ENCODE measurements at regions of chr5 and their contacts with region 1.

Region 1: GRCh38 chr5:55172051-55172899 is 702 bp downstream of the CDC20B start:
- DNase-seq: peak; percentile 58
- H3K4me3 Mint-ChIP-seq: peak overlapping the region; percentile 74
- H3K27ac Mint-ChIP-seq: no peak overlapping the region
- H3K4me1 Mint-ChIP-seq: peaks cover 22% of the 10 kb centered on the region
- H3K27me3 Mint-ChIP-seq: peaks cover 9% of the 10 kb centered on the region
- CTCF ChIP-seq: peak; percentile 51

Region 2: GRCh38 chr5:55134053-55134722 is 38.1 kb before region 1 on chr5:
- CTCF ChIA-PET with region 1: no interaction called
- intact Hi-C with region 1: no loop called
- DNase-seq: no peak
- H3K4me3 Mint-ChIP-seq: no peak overlapping the region
- H3K27ac Mint-ChIP-seq: no peak overlapping the region
- H3K4me1 Mint-ChIP-seq: no peaks in the 10 kb centered on the region
- H3K27me3 Mint-ChIP-seq: peaks cover 68% of the 10 kb centered on the region
- CTCF ChIP-seq: no peak

Region 3: DNA sequence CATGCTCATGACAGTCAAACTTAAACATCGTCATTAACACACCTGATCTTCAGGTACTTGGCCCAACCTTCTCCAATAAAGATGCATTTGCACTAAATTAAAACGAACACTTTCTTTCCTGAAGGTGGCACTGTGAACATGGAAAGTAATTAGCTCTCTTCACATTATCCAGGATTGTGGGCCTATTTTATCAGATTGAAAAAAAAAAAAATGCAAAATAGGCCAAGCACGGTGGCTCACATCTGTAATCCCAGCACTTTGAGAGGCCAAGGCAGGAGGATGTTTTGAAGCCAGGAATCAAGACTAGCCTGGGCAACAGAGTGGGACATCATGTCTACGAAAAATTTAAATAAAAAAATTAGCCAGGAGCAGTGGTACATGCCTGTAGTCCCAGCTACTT is 15.1 kb after region 1 on chr5:
- CTCF ChIA-PET with region 1: interaction called, 11 read pairs
- intact Hi-C with region 1: no loop called
- DNase-seq: peak; percentile 11
- H3K4me3 Mint-ChIP-seq: no peak overlapping the region
- H3K27ac Mint-ChIP-seq: no peak overlapping the region
- H3K4me1 Mint-ChIP-seq: no peaks in the 10 kb centered on the region
- H3K27me3 Mint-ChIP-seq: peaks cover 24% of the 10 kb centered on the region
- CTCF ChIP-seq: no peak

Region 4: DNA sequence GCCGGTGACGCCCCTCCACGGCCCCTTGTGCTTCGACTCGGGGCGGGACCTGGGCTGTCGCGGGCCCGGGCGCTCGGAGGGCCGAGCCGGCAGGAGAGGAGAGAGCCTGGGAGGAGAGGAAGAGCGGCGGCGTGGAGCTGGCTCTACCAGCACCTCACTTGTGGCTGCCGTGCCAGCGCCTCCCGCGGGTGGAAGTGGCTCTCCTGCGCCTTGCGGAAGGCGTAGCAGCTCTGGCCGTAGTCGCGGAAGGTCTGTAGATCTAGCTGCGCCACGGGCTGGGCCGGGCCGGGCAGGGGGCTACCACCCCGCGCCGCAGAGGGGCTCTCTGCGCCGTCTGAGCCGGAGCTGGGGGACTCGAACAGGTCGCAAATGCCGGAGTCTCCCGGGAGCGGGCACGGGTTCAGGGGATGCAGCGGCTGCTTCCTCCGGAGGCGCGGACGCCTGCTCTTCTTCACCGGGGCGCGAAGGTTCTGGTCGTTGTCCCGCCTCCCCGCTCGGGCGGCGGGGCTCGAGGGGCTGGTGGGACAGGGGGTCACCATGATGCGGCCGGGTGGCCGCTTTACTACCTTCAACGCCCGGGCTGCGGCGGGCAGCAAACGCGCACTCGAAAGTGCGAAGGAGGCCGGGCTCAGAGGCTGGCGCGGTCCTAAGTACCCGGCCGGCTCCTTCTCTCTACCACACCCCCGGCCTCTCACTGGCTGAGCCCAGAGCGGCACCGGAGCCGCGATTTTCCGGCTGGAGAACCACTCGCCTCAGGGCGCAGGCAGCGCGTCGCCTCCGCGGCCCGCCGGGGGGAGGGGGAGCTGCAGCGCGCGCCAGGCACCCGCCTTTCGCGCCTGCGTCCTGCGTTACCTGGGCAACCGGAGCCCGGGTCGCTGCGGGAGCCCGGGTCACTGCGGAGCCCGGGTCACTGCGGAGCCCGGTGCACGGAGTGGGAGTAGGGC is 61.0 kb after region 1 on chr5 and contains the start of gene CCNO:
- CTCF ChIA-PET with region 1: interaction called, 4 read pairs
- intact Hi-C with region 1: loop called (anchors 5 kb)
- DNase-seq: peak; percentile 88
- H3K4me3 Mint-ChIP-seq: peak within 1 kb of the TSS; percentile 93
- H3K27ac Mint-ChIP-seq: peak within 1 kb of the TSS; percentile 88
- H3K4me1 Mint-ChIP-seq: peaks cover 11% of the 10 kb centered on the region
- H3K27me3 Mint-ChIP-seq: no peaks in the 10 kb centered on the region
- CTCF ChIP-seq: no peak
- total RNA-seq, gene CCNO: 10.1 and 12.5 TPM in 2 replicates

Region 5: GRCh38 chr5:55407059-55407684 is 234.9 kb after region 1 on chr5:
- CTCF ChIA-PET with region 1: no interaction called
- intact Hi-C with region 1: loop called (anchors 5 kb)
- DNase-seq: peak; percentile 22
- H3K4me3 Mint-ChIP-seq: no peak overlapping the region
- H3K27ac Mint-ChIP-seq: no peak overlapping the region
- H3K4me1 Mint-ChIP-seq: peaks cover 15% of the 10 kb centered on the region
- H3K27me3 Mint-ChIP-seq: no peaks in the 10 kb centered on the region
- CTCF ChIP-seq: peak; percentile 22

Region 6: GRCh38 chr5:55936100-55936693 is 763.9 kb after region 1 on chr5:
- CTCF ChIA-PET with region 1: no interaction called
- intact Hi-C with region 1: loop called (anchors 10 kb)
- DNase-seq: peak; percentile 80
- H3K4me3 Mint-ChIP-seq: no peak overlapping the region
- H3K27ac Mint-ChIP-seq: no peak overlapping the region
- H3K4me1 Mint-ChIP-seq: peaks cover 35% of the 10 kb centered on the region
- H3K27me3 Mint-ChIP-seq: no peaks in the 10 kb centered on the region
- CTCF ChIP-seq: peak; percentile 79

Measured in Calu3 (cell line).